Activated CD4-positive, alpha-beta T cell treated with anti-CD3 and anti-CD28 coated beads for 36 hours (primary cell): ENCODE measurements at regions of chrX and their contacts with region 1.

Region 1: DNA sequence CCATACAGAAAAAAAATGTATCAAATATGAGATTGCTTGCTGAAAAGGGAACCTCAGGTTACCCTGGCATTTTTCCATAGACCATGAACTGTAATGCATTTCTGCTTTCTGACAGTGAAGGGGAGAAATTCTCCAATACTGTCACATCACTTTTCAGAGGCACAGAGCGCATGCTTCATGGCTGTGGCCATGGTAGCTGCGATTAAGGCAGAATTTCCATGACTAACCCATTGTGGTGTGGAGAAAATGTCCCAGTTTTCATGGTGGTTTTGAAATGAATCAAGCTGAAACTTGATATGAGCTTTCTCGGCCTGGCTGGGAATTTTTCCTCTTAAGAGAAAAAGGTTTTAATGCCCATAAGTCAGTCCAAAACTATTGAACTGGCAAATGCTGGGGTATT is 39.5 kb upstream of the MAP3K15 start:
- DNase-seq: peak; percentile 59
- ATAC-seq: peak; percentile 72
- H3K4me3 Mint-ChIP-seq: no peak overlapping the region
- H3K27ac Mint-ChIP-seq: peak overlapping the region; percentile 79
- H3K4me1 Mint-ChIP-seq: peaks cover 54% of the 10 kb centered on the region
- H3K27me3 Mint-ChIP-seq: no peaks in the 10 kb centered on the region

Region 2: DNA sequence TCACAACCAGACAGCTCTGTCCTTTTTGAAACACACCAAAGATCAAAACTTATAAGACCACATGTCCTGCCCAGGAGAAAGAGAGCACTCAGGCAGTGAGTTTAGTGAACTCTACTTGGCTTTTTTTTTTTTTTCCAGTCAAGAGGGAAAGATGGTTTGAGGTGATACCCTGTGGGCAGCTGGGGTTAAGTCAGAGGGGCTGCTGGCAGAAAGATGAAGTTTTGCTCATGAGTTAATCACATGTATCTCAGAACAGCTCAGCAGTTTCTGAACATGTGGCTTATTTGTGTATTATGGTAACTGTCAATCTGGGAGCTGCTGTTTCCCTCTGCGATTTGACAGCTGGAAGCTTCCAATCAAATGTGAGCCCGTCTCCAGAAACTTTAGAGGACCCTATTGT is 16.9 kb after region 1 on chrX:
- CTCF ChIA-PET with region 1: interaction called, 4 read pairs
- POLR2A ChIA-PET with region 1: interaction called, 5 read pairs
- intact Hi-C with region 1: loop called (anchors 2 kb)
- DNase-seq: peak; percentile 59
- ATAC-seq: peak; percentile 85
- H3K4me3 Mint-ChIP-seq: no peak overlapping the region
- H3K27ac Mint-ChIP-seq: peak overlapping the region; percentile 82
- H3K4me1 Mint-ChIP-seq: peaks cover 38% of the 10 kb centered on the region
- H3K27me3 Mint-ChIP-seq: no peaks in the 10 kb centered on the region